ENCODE measurements at regions of chr10 and their contacts with region 1.

Region 1: DNA sequence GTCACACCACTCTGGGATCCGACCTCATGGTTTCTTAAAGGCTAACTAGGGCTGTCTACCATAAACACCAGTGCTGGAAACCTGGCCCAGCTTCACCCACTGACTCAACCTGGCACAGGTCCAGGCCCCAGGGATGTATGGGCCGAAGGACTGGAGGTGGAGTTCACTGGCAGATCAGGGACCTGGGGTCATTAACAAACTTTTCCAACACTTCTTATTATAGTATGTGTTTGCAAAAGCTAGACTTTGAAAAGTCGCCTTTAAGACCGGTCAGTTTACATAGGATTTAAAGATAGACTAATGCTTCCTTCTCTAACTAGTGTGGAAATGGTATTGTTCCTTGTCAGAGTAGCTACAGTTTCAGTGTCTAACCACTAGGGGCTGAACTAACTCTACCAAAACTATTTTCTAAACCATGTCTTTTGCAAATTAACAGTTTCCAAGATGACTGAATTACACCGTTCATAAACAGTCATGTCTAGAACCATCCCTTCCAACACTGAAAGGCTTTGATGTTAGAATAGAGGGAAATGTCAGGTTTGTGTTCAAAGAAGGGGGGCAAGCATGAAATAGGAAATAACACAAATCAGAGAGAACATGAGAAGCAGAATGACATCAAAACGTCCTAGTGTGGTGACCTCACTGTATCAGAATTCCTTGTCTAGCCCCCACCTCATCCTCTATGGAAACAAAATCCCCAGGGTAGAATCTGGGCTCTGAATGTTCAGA is 29.7 kb downstream of the STN1 start:
- DNase-seq: no peak
- H3K4me3 Mint-ChIP-seq: no peak overlapping the region
- H3K27ac Mint-ChIP-seq: peak overlapping the region; percentile 73
- H3K4me1 Mint-ChIP-seq: peaks cover 32% of the 10 kb centered on the region
- H3K27me3 Mint-ChIP-seq: no peaks in the 10 kb centered on the region

Region 2: GRCh38 chr10:103911021-103911459 is 22.8 kb after region 1 on chr10:
- intact Hi-C with region 1: loop called (anchors 1 kb)
- DNase-seq: peak; percentile 54
- H3K4me3 Mint-ChIP-seq: peak overlapping the region; percentile 68
- H3K27ac Mint-ChIP-seq: peak overlapping the region; percentile 90
- H3K4me1 Mint-ChIP-seq: peaks cover 72% of the 10 kb centered on the region
- H3K27me3 Mint-ChIP-seq: no peaks in the 10 kb centered on the region

Region 3: DNA sequence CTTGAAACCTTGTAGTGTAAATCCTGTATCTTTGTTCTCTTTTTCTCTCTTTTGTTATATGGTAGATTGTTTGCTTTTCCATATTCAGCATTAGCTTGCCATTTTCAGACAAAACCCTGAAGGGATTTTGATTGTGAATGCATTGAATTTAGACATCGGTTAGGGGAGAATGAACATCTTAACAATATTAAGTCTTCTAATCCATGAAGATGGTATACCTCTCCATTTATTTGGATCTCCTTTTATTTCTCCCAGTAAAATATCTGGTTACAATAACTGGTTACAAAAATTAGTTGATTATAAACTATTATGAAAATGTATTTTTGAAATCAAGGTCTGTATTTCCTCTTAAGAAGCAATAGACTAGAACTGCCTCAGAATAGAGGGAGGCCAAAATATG is 66.3 kb after region 1 on chr10:
- intact Hi-C with region 1: no loop called
- DNase-seq: no peak
- H3K4me3 Mint-ChIP-seq: no peak overlapping the region
- H3K27ac Mint-ChIP-seq: no peak overlapping the region
- H3K4me1 Mint-ChIP-seq: no peaks in the 10 kb centered on the region
- H3K27me3 Mint-ChIP-seq: peaks cover 26% of the 10 kb centered on the region

Region 4: DNA sequence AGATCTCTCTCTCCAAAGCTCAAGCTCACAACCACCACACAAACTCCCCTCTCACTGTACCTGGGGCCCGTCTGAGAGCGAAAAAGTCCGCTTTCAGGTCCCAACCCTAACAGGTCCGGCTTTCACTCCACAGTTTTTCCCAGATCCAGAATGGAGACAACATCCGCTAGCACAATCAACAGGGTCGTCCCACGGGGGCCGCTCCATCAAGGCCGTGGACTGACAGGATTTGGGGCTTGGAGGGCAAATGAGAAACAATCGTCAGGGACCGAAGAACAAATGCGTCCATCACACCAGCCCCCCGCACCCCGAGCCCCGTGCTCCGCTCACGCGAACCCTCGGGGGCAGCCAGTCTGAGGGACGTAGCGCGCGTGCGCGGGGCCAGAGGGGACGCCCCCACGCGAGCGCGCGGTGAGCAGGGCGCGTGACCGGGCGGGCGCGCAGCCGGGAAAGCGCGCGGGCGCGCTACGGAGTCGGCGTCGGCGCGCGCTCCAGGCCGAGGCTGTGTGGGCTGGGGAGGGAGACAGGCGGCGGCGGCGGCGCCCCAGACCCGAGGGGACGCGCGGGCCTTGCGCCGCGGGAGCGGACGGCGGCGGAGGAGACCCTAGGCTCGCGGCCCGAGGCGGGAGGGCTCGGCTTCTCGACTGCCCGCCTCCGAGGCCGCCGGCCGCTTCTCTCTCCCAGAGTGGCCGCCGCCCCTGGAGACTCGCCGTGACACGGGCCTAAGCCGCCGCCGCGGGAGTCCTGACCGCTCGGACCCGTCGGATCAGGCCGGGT is 78.6 kb after region 1 on chr10 and contains the start of gene SLK:
- intact Hi-C with region 1: loop called (anchors 1 kb)
- DNase-seq: peak; percentile 81
- H3K4me3 Mint-ChIP-seq: peak within 1 kb of the TSS; percentile 97
- H3K27ac Mint-ChIP-seq: peak within 1 kb of the TSS; percentile 90
- H3K4me1 Mint-ChIP-seq: peaks cover 38% of the 10 kb centered on the region
- H3K27me3 Mint-ChIP-seq: no peaks in the 10 kb centered on the region
- total RNA-seq, gene SLK: 25.0 and 27.1 TPM in 2 replicates

Region 5: GRCh38 chr10:104016661-104017060 is 128.4 kb after region 1 on chr10:
- intact Hi-C with region 1: loop called (anchors 2 kb)
- DNase-seq: no peak
- H3K4me3 Mint-ChIP-seq: no peak overlapping the region
- H3K27ac Mint-ChIP-seq: no peak overlapping the region
- H3K4me1 Mint-ChIP-seq: no peaks in the 10 kb centered on the region
- H3K27me3 Mint-ChIP-seq: no peaks in the 10 kb centered on the region

Region 6: GRCh38 chr10:104028146-104028545 is 139.9 kb after region 1 on chr10:
- intact Hi-C with region 1: no loop called
- DNase-seq: no peak
- H3K4me3 Mint-ChIP-seq: no peak overlapping the region
- H3K27ac Mint-ChIP-seq: no peak overlapping the region
- H3K4me1 Mint-ChIP-seq: no peaks in the 10 kb centered on the region
- H3K27me3 Mint-ChIP-seq: no peaks in the 10 kb centered on the region

Region 7: GRCh38 chr10:104209575-104210198 is 321.4 kb after region 1 on chr10:
- intact Hi-C with region 1: loop called (anchors 1 kb)
- DNase-seq: no peak
- H3K4me3 Mint-ChIP-seq: no peak overlapping the region
- H3K27ac Mint-ChIP-seq: no peak overlapping the region
- H3K4me1 Mint-ChIP-seq: no peaks in the 10 kb centered on the region
- H3K27me3 Mint-ChIP-seq: peaks cover 29% of the 10 kb centered on the region

Region 8: GRCh38 chr10:104220522-104220921 is 332.2 kb after region 1 on chr10:
- intact Hi-C with region 1: no loop called
- DNase-seq: no peak
- H3K4me3 Mint-ChIP-seq: no peak overlapping the region
- H3K27ac Mint-ChIP-seq: no peak overlapping the region
- H3K4me1 Mint-ChIP-seq: no peaks in the 10 kb centered on the region
- H3K27me3 Mint-ChIP-seq: peaks cover 22% of the 10 kb centered on the region

Region 9: DNA sequence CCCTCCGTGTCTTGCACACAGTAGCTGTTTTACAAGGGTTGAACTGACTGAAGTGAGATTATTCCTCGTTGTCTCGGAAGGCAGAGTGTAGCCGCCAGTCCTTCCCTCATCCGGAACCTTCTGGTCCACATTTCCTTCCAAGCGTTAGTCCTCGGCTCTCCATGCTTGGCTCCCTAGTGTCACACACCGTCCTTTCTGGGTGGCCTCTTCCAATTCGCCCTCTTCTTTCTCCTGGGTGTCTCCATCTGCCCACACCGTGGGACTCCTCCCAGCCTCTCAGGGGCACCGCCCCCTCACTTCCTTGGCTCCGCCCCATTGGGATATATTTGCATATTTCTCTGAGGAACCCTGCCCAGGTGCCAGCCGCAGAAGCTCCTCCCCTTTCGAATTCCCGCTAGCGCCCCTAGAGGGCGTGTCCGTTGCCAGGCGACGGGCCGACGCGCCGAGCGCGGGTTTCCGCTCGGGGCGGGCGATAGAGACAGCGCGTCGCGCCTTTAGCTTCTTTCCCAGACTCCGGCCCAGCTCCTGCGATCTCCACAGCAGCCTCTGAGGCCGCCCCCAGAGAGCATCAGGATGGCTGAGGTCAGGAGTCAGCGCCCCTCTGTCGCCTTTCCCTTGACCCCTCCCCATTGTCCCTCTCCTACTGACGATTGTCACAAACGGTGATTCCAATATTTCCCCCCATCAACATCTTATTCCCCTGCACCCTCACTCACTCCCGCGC is 465.2 kb after region 1 on chr10 and contains the start of gene CFAP58:
- intact Hi-C with region 1: loop called (anchors 1 kb)
- DNase-seq: peak; percentile 89
- H3K4me3 Mint-ChIP-seq: no peak within 1 kb of the TSS
- H3K27ac Mint-ChIP-seq: peak within 1 kb of the TSS; percentile 67
- H3K4me1 Mint-ChIP-seq: no peaks in the 10 kb centered on the region
- H3K27me3 Mint-ChIP-seq: peaks cover 2% of the 10 kb centered on the region
- total RNA-seq, gene CFAP58: 0.08 and 0.24 TPM in 2 replicates

Measured in activated T-helper 1 cell treated with anti-CD3 and anti-CD28 coated beads, Interleukin-12 subunit alpha, Interleukin-12 subunit beta, Interleukin-2, Interleukin-4 antibody, amounts not matched to agents 30 ng/mL and 10 ng/mL and 1 ng/mL, durations not matched to agents 14 hours and 24 hours and 36 hours (primary cell).